ENCODE measurements at regions of chr1 and their contacts with region 1.

Region 1: GRCh38 chr1:81549604-81550127 is 251.1 kb upstream of the ADGRL2 start:
- DNase-seq: no peak
- H3K4me3 ChIP-seq: no peak overlapping the region
- H3K27ac ChIP-seq: peak overlapping the region in 1 of 4 donors; percentile 1
- H3K4me1 ChIP-seq: peaks cover 0 to 23% (median 9%) of the 10 kb centered on the region in 4 donors
- H3K27me3 ChIP-seq: no peaks in the 10 kb centered on the region
- CTCF ChIP-seq: peak; percentile 29 to 47 (median 36)
- EP300 ChIP-seq: no peak
- POLR2A ChIP-seq: no peak

Region 2: DNA sequence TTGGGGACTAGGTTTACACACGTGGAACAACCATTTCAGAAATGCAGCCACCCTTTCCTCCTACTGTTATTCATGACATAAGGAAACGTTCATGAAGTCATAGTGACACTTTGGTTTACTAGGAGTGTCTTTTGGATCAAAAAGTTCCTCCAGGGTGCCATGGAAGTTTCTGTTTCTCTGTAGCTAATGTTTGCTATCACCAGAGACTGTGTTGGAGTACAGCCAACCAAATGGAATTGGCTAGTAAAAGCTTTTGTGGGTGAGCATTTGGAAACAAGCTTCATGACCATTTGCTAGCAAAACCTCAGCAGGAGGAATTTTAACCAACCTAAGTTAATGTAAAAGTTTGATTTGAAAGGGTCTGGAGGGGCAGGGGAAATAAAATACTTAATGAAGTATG is 207.2 kb after region 1 on chr1:
- intact Hi-C with region 1: loop called (anchors 10 kb)
- DNase-seq: no peak
- H3K4me3 ChIP-seq: no peak overlapping the region
- H3K27ac ChIP-seq: no peak overlapping the region
- H3K4me1 ChIP-seq: peaks cover 3 to 27% (median 21%) of the 10 kb centered on the region in 4 donors
- H3K27me3 ChIP-seq: no peaks in the 10 kb centered on the region
- CTCF ChIP-seq: no peak
- EP300 ChIP-seq: no peak
- POLR2A ChIP-seq: no peak

Measured in esophagus muscularis mucosa (tissue), 4 donors.